ENCODE measurements at regions of chr17 and their contacts with region 1.

Region 1: DNA sequence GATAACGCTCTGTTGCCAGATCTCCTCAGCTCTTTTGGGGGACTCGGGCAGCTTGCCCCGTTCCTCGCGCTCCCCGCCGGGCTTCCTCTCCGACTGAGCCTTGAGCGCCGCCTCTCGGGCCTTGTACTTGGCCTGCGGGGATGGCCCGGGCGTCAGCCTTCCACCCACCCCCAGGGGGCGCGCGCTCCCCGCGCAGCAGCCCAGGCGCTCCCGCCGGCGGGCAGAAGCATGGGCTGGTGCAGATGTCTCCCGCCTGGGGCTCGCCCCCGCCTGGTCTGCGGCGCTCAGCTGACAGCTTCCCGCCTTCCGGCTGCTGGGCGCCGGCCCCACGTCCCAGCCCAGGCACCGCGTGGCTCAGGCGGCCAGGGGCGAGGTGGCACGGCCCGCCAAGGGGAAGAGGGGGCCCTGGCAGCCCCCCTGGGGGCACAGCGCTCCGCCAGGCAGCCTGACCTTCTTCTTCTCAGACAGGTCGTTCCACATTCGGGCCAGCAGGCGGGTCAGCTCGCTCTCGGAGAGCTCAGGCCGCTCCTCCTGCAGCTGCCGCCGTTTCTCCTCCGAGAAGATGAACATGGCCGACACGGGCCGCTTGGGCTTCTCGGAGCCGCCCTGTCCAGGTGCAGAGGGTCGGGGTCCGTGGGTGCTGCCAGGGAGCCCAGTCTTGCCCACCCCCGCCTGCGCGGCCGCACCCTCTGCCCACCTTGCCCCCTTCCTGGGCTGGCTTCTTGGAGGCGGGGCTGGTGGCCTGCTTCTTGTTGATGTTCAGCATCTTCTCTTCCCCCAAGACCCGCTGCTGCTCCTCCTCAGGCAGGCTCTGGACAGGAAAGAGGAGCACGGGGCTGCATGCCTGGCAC is 8.9 kb downstream of the UBTF start:
- DNase-seq: peak; percentile 90
- H3K4me3 Mint-ChIP-seq: peak overlapping the region; percentile 56
- H3K27ac Mint-ChIP-seq: peak overlapping the region; percentile 88
- H3K4me1 Mint-ChIP-seq: peaks cover 53% of the 10 kb centered on the region
- H3K27me3 Mint-ChIP-seq: no peaks in the 10 kb centered on the region

Region 2: GRCh38 chr17:43966271-43966670 is 244.3 kb before region 1 on chr17:
- CTCF ChIA-PET with region 1: no interaction called
- POLR2A ChIA-PET with region 1: no interaction called
- DNase-seq: no peak
- H3K4me3 Mint-ChIP-seq: no peak overlapping the region
- H3K27ac Mint-ChIP-seq: no peak overlapping the region
- H3K4me1 Mint-ChIP-seq: no peaks in the 10 kb centered on the region
- H3K27me3 Mint-ChIP-seq: peaks cover 17% of the 10 kb centered on the region

Region 3: DNA sequence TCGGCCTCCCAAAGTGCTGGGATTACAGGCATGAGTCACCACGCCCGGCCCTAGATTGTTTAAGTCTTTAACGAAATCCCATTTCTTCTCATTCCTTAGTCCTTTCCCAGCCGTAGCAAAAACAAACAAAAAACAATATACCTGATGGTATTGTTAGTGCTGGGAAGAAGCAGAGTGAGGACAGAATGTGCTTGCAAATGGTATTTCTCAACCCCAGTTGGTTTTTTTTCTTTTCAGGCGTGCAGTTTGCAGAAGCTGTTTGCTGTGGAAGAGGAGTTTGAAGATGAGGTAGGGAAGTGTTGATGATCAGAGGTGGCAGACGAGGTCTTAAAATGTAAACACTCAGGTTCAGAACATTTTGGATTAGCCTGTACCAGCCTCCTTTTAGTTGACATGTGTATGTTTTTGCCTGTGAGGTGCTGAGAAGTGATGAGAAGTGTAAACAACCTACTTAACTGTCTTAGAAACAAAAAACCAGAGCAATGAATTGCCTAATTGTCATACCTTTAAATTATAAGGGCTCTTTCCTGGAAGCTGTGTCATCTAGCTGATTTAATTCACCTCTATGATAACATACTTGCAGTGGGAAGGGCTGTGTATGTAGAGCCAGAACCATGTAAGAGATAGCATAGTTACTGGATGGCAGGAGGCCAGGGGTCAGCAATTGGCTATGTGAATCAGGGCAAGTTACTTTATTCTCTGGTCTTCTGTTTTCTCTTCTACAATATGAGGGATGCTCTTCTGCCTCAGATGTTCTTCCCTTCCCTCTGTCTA is 65.4 kb before region 1 on chr17:
- CTCF ChIA-PET with region 1: no interaction called
- POLR2A ChIA-PET with region 1: no interaction called
- DNase-seq: no peak
- H3K4me3 Mint-ChIP-seq: no peak overlapping the region
- H3K27ac Mint-ChIP-seq: no peak overlapping the region
- H3K4me1 Mint-ChIP-seq: peaks cover 21% of the 10 kb centered on the region
- H3K27me3 Mint-ChIP-seq: no peaks in the 10 kb centered on the region

Region 4: GRCh38 chr17:44186307-44187130 is 24.0 kb before region 1 on chr17 and contains the start of gene TMUB2:
- CTCF ChIA-PET with region 1: interaction called, 30 read pairs
- POLR2A ChIA-PET with region 1: no interaction called
- DNase-seq: peak; percentile 99
- H3K4me3 Mint-ChIP-seq: peak within 1 kb of the TSS; percentile 100
- H3K27ac Mint-ChIP-seq: peak within 1 kb of the TSS; percentile 99
- H3K4me1 Mint-ChIP-seq: peaks cover 44% of the 10 kb centered on the region
- H3K27me3 Mint-ChIP-seq: no peaks in the 10 kb centered on the region
- total RNA-seq, gene TMUB2: 36.6 to 37.1 TPM

Region 5: DNA sequence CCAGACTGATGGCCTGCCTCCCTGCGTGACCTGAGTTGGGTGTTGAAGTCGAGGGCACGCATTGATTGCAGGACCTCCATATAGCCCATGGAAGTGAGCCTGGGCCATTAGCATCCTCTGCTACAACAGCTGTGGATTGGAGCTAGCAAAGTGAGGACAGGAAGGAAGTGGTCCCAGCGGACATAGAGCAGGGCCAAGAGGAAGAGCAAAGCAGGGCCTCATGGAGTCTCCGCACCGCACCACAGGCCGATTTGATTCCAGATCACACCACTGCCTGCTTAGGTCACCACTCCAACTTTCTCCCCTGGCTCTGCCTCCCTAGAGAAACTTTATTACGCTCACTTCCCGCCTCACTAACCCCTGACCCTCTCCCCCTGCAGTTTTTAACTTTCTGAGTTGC is 19.6 kb after region 1 on chr17:
- CTCF ChIA-PET with region 1: interaction called, 10 read pairs
- POLR2A ChIA-PET with region 1: interaction called, 6 read pairs
- DNase-seq: no peak
- H3K4me3 Mint-ChIP-seq: no peak overlapping the region
- H3K27ac Mint-ChIP-seq: no peak overlapping the region
- H3K4me1 Mint-ChIP-seq: peaks cover 4% of the 10 kb centered on the region
- H3K27me3 Mint-ChIP-seq: peaks cover 7% of the 10 kb centered on the region

Region 6: DNA sequence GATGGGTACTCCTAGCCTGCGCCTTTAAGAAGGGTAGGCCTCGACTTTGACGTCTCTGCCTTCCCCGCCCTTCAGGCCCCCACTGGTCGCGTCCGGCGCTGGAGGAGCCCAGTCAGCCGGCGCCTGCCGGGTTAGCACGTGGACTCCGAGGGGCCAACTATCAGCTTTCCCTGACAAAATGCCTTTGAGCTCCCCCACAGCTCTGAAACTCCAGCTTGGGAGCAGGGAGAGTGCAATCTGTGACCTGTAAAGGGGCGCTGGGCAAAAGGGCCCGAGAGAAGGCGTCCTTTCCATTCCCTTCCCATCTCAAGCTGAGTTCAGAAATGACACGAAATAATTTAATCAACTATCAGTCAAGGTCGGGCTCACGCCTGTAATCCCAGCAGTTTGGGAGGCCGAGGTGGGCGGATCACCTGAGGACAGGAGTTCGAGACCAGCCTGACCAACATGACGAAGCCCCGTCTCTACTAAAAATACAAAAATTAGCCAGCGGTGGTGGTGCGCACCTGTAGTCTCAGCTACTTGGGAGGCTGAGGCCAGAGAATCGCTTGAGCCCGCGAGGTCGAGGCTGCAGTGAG is 116.4 kb after region 1 on chr17:
- CTCF ChIA-PET with region 1: interaction called, 34 read pairs
- POLR2A ChIA-PET with region 1: no interaction called
- DNase-seq: peak; percentile 96
- H3K4me3 Mint-ChIP-seq: peak overlapping the region; percentile 72
- H3K27ac Mint-ChIP-seq: peak overlapping the region; percentile 86
- H3K4me1 Mint-ChIP-seq: peaks cover 31% of the 10 kb centered on the region
- H3K27me3 Mint-ChIP-seq: no peaks in the 10 kb centered on the region

Region 7: GRCh38 chr17:44344939-44345453 is 134.4 kb after region 1 on chr17 and contains the start of gene GRN:
- CTCF ChIA-PET with region 1: interaction called, 13 read pairs
- POLR2A ChIA-PET with region 1: no interaction called
- DNase-seq: peak; percentile 91
- H3K4me3 Mint-ChIP-seq: peak within 1 kb of the TSS; percentile 81
- H3K27ac Mint-ChIP-seq: peak within 1 kb of the TSS; percentile 62
- H3K4me1 Mint-ChIP-seq: peaks cover 27% of the 10 kb centered on the region
- H3K27me3 Mint-ChIP-seq: peaks cover 4% of the 10 kb centered on the region
- total RNA-seq, gene GRN: 61.1 to 70.5 TPM

Measured in activated CD4-positive, alpha-beta T cell treated with anti-CD3 and anti-CD28 coated beads, Interleukin-2, amount 10 ng/mL, durations not matched to agents 7 days and 5 days (primary cell).